Esophagus muscularis mucosa (tissue), 4 donors: ENCODE measurements at regions of chr2 and their contacts with region 1.

Region 1: GRCh38 chr2:28958689-28959088 is 22.4 kb upstream of the TOGARAM2 start:
- DNase-seq: no peak
- H3K4me3 ChIP-seq: peak overlapping the region in 2 of 4 donors; percentile 18
- H3K27ac ChIP-seq: no peak overlapping the region
- H3K4me1 ChIP-seq: peaks cover 0 to 18% (median 12%) of the 10 kb centered on the region in 4 donors
- H3K27me3 ChIP-seq: no peaks in the 10 kb centered on the region
- CTCF ChIP-seq: peak; percentile 62 to 74 (median 67)
- EP300 ChIP-seq: no peak
- POLR2A ChIP-seq: no peak

Region 2: GRCh38 chr2:28633746-28634145 is 324.9 kb before region 1 on chr2:
- intact Hi-C with region 1: no loop called
- DNase-seq: no peak
- H3K4me3 ChIP-seq: peak overlapping the region in 1 of 4 donors; percentile 24
- H3K27ac ChIP-seq: peak overlapping the region; percentile 92 to 98 (median 96)
- H3K4me1 ChIP-seq: peaks cover 37 to 98% (median 95%) of the 10 kb centered on the region in 4 donors
- H3K27me3 ChIP-seq: no peaks in the 10 kb centered on the region
- CTCF ChIP-seq: no peak
- EP300 ChIP-seq: peak; percentile 80
- POLR2A ChIP-seq: no peak

Region 3: GRCh38 chr2:28780496-28780895 is 178.2 kb before region 1 on chr2:
- intact Hi-C with region 1: no loop called
- DNase-seq: no peak
- H3K4me3 ChIP-seq: no peak overlapping the region
- H3K27ac ChIP-seq: peak overlapping the region in 3 of 4 donors; percentile 53 to 67 (median 53)
- H3K4me1 ChIP-seq: peaks cover 5 to 75% (median 54%) of the 10 kb centered on the region in 4 donors
- H3K27me3 ChIP-seq: no peaks in the 10 kb centered on the region
- CTCF ChIP-seq: no peak
- EP300 ChIP-seq: no peak
- POLR2A ChIP-seq: no peak

Region 4: GRCh38 chr2:28981016-28981441 is 22.3 kb after region 1 on chr2 and contains the start of gene TOGARAM2:
- intact Hi-C with region 1: no loop called
- DNase-seq: no peak
- H3K4me3 ChIP-seq: peak within 1 kb of the TSS in 2 of 4 donors; percentile 5 to 10
- H3K27ac ChIP-seq: peak within 1 kb of the TSS; percentile 66 to 89 (median 86)
- H3K4me1 ChIP-seq: peaks cover 24 to 61% (median 48%) of the 10 kb centered on the region in 4 donors
- H3K27me3 ChIP-seq: no peaks in the 10 kb centered on the region
- CTCF ChIP-seq: no peak
- EP300 ChIP-seq: no peak
- POLR2A ChIP-seq: no peak
- total RNA-seq, gene TOGARAM2: 0.57 to 0.99 (median 0.77) TPM

Region 5: GRCh38 chr2:29011418-29012060 is 52.9 kb after region 1 on chr2:
- intact Hi-C with region 1: loop called (anchors 2 kb)
- DNase-seq: no peak
- H3K4me3 ChIP-seq: no peak overlapping the region
- H3K27ac ChIP-seq: peak overlapping the region in 3 of 4 donors; percentile 35 to 61 (median 59)
- H3K4me1 ChIP-seq: peaks cover 31 to 45% (median 35%) of the 10 kb centered on the region in 4 donors
- H3K27me3 ChIP-seq: no peaks in the 10 kb centered on the region
- CTCF ChIP-seq: no peak
- EP300 ChIP-seq: no peak
- POLR2A ChIP-seq: no peak

Region 6: GRCh38 chr2:29196792-29197788 is 238.4 kb after region 1 on chr2:
- intact Hi-C with region 1: loop called (anchors 2 kb)
- DNase-seq: no peak
- H3K4me3 ChIP-seq: no peak overlapping the region
- H3K27ac ChIP-seq: no peak overlapping the region
- H3K4me1 ChIP-seq: peaks cover 0 to 7% (median 0%) of the 10 kb centered on the region in 4 donors
- H3K27me3 ChIP-seq: no peaks in the 10 kb centered on the region
- CTCF ChIP-seq: peak; percentile 72 to 76 (median 74)
- EP300 ChIP-seq: no peak
- POLR2A ChIP-seq: no peak